A673 (cell line): ENCODE measurements at regions of chr7 and their contacts with region 1.

Region 1: DNA sequence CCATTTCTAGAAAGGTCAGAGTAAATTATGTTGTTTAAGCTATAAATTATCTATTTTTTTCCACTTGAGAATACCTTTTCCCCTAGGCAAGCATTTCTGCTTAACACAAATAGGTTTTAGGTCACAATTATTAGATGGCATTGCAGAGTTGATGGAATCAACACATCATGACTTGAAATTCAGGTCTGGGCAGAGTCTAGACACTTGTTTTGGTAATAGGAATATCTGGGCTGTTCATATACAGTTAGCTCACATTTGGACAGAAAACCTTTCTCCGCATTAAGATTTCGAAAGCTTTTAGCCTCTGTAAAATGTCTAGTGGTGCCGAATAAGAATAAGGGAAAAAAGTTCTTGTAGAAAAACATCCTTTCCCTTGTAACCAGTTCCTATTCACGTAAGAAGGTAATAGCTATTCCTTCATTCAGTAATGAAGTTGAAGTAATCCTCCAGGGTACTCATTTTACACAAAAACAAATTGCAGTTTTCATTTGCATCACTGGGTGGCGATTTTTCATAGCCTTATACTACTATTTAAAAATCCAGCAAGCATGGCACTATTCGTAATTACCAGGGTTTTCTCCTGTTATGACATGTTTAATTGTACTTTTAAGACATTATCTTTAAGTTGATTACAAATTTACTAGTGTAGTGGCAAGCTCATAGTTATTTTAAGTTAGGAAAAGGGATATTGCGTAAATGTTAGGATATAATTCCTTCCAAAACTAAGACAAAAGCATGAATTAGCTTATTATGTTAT is 37.0 kb downstream of the RPA3 start:
- DNase-seq: peak; percentile 81
- H3K4me3 ChIP-seq: no peak overlapping the region
- H3K27ac ChIP-seq: no peak overlapping the region
- H3K4me1 ChIP-seq: no peaks in the 10 kb centered on the region
- H3K27me3 ChIP-seq: no peaks in the 10 kb centered on the region
- CTCF ChIP-seq: peak; percentile 73

Region 2: DNA sequence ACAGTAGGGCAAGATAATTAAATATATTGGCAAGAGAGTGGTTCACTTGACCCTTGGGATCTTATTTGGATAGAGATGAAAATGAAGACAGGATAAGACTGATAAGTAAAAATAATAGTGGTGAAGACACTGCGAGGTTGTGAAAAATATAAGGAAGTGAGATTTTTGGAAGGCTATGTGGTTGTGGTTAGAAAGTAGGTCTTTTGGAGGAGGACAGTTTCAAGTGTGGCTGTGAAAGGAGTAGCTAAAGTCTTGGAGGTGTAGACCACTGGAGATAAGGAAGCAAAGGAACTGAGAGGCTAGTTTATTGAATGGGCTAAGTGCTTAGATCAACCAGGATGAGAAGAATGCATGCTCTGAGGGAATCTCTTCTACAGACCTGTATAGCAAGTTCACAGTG is 103.5 kb before region 1 on chr7:
- CTCF ChIA-PET with region 1: no interaction called
- POLR2A ChIA-PET with region 1: no interaction called
- intact Hi-C with region 1: no loop called
- DNase-seq: no peak
- H3K4me3 ChIP-seq: no peak overlapping the region
- H3K27ac ChIP-seq: no peak overlapping the region
- H3K4me1 ChIP-seq: peaks cover 2% of the 10 kb centered on the region
- H3K27me3 ChIP-seq: no peaks in the 10 kb centered on the region
- CTCF ChIP-seq: no peak

Region 3: GRCh38 chr7:7761340-7761980 is 80.1 kb after region 1 on chr7:
- CTCF ChIA-PET with region 1: interaction called, 5 read pairs
- POLR2A ChIA-PET with region 1: no interaction called
- intact Hi-C with region 1: loop called (anchors 1 kb)
- DNase-seq: peak; percentile 55
- H3K4me3 ChIP-seq: no peak overlapping the region
- H3K27ac ChIP-seq: no peak overlapping the region
- H3K4me1 ChIP-seq: no peaks in the 10 kb centered on the region
- H3K27me3 ChIP-seq: no peaks in the 10 kb centered on the region
- CTCF ChIP-seq: peak; percentile 50

Region 4: GRCh38 chr7:7772397-7772821 is 91.1 kb after region 1 on chr7:
- CTCF ChIA-PET with region 1: no interaction called
- POLR2A ChIA-PET with region 1: no interaction called
- intact Hi-C with region 1: no loop called
- DNase-seq: no peak
- H3K4me3 ChIP-seq: no peak overlapping the region
- H3K27ac ChIP-seq: no peak overlapping the region
- H3K4me1 ChIP-seq: no peaks in the 10 kb centered on the region
- H3K27me3 ChIP-seq: no peaks in the 10 kb centered on the region
- CTCF ChIP-seq: no peak

Region 5: GRCh38 chr7:7968543-7969305 is 287.4 kb after region 1 on chr7 and contains the start of gene GLCCI1:
- CTCF ChIA-PET with region 1: interaction called, 5 read pairs
- POLR2A ChIA-PET with region 1: no interaction called
- intact Hi-C with region 1: loop called (anchors 10 kb)
- DNase-seq: peak; percentile 98
- H3K4me3 ChIP-seq: peak within 1 kb of the TSS; percentile 86
- H3K27ac ChIP-seq: peak within 1 kb of the TSS; percentile 82
- H3K4me1 ChIP-seq: peaks cover 6% of the 10 kb centered on the region
- H3K27me3 ChIP-seq: no peaks in the 10 kb centered on the region
- CTCF ChIP-seq: no peak
- total RNA-seq, gene GLCCI1: 6.9 and 9.9 TPM in 2 replicates

Region 6: DNA sequence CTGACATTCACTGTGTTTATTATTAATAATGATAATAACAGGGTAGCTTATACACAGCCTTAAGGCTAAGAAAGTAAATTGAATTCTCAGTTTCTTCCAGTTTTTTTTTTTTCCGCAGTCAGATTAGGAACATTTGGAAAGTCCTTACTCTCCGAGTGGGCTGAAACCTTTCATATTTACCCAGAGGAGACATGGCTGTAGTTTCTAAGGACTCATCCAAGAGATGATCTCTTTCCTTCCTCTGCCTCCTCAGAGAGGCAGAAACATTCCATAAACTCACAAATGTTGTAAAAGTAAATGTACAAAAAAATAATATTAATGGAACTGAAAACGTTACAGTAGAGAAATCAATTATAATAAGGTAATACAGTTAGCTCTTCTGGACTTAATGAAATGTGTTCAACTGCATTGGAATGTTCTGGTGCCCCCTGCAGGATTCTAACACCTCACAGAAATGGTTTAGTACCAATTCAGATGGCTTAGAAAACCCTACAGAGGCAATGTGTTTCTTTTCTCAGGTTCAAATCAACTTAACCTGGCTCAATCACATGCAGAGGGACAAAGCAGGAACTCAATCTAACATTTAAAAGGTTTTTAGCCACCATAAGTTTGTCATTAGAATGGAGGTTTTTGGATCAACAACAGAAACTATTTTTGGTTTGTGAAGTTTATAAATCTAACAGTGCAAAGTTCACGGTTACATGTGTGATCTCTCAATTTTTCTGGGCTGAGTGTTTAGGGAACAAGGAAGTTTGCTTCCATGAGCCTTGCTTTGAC is 508.9 kb after region 1 on chr7:
- CTCF ChIA-PET with region 1: interaction called, 10 read pairs
- POLR2A ChIA-PET with region 1: no interaction called
- intact Hi-C with region 1: loop called (anchors 2 kb)
- DNase-seq: peak; percentile 69
- H3K4me3 ChIP-seq: no peak overlapping the region
- H3K27ac ChIP-seq: no peak overlapping the region
- H3K4me1 ChIP-seq: peaks cover 6% of the 10 kb centered on the region
- H3K27me3 ChIP-seq: no peaks in the 10 kb centered on the region
- CTCF ChIP-seq: peak; percentile 83

Region 7: DNA sequence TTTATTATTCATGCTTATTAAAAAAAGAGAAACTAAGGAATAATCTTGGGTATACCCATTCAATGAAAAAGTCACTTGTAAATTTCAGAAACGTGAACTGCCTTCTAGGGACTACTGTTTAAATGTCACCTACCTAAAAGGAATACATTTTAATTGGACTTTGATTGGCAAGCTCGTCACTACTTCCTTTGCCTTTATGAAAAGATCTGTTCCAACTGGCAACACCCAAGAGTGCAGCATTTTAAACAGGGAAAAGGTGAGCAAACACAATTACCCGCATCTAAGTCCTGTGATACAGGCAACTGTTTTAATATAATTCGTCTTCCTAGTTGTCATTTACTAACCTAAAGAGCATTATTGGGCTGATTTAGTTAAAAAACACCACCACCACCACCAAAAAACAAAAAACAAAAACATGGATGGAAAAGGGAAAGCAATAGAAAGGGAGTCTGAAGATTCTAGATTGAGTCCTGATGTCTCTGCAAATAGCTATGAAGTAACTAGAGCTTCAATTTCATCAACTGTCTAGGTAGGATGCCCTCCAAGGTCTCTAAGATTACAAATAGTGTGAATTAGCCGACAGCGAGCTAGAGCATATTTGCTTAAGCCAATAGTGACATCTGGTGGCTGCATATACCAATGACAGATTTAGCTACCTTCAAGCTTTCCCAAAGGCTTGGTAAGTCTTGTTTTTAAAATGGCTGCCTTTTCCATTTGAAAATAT is 614.4 kb after region 1 on chr7:
- CTCF ChIA-PET with region 1: no interaction called
- POLR2A ChIA-PET with region 1: no interaction called
- intact Hi-C with region 1: loop called (anchors 5 kb)
- DNase-seq: peak; percentile 87
- H3K4me3 ChIP-seq: no peak overlapping the region
- H3K27ac ChIP-seq: no peak overlapping the region
- H3K4me1 ChIP-seq: no peaks in the 10 kb centered on the region
- H3K27me3 ChIP-seq: peaks cover 46% of the 10 kb centered on the region
- CTCF ChIP-seq: peak; percentile 78